ENCODE measurements at regions of chr12 and their contacts with region 1.

Region 1: GRCh38 chr12:14167005-14167628 is 185.7 kb upstream of the GRIN2B start:
- DNase-seq: no peak
- ATAC-seq: peak; percentile 70
- H3K4me3 ChIP-seq: no peak overlapping the region
- H3K27ac ChIP-seq: no peak overlapping the region
- H3K4me1 ChIP-seq: peaks cover 5% of the 10 kb centered on the region
- H3K27me3 ChIP-seq: no peaks in the 10 kb centered on the region
- CTCF ChIP-seq: peak; percentile 88 to 97 (median 94)
- EP300 ChIP-seq: no peak
- POLR2A ChIP-seq: no peak
- RAD21 ChIP-seq: peak; percentile 100

Region 2: DNA sequence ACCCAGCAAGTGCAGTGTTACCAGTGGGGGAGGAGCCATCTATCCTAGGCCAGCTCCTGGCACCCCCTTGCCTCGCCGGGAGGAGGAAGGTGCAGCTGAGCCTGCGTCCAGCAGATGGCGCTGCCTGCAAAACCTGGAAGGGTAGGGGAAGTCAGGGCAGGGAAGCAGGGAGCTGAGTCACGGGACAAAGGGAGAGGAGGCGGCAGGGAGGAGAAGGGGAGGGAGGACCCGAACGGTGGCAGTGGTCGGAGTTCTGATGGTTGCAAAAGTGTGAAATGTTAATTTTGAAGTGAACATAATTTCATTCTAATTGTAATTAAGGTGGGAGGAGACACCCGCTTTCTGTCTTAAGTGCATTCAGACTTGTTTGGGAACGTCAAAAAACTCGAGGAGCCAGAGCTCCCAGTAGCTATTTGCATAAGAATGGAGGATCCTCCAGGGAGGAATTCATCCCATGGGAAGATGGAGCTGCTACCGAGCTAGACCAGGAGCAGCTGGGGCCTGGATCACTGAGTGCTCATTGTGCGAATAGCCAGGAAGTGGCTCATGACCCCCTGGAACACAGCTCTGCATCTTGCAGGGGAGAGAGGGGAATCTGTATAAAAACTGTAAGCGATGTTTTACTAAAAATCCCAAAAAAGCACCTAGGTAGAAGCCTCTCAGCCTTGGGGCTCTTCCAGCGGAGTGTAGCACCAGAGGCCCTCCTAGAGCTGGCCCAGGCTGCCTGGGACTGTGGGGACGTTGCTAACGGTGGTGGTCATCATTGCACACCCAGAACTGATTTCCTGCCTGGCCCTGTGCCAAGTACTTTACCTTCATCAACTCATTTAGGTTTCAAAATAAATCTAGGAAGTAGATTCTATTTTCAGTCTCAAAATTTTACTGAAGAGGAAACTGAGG is 911.1 kb before region 1 on chr12:
- CTCF ChIA-PET with region 1: interaction called, 14 read pairs
- POLR2A ChIA-PET with region 1: no interaction called
- RAD21 ChIA-PET with region 1: interaction called, 4 read pairs
- SMC1A ChIA-PET with region 1: interaction called, 3 read pairs
- in situ Hi-C with region 1: no loop called
- intact Hi-C with region 1: no loop called
- DNase-seq: peak; percentile 28
- ATAC-seq: peak; percentile 100
- H3K4me3 ChIP-seq: no peak overlapping the region
- H3K27ac ChIP-seq: no peak overlapping the region
- H3K4me1 ChIP-seq: no peaks in the 10 kb centered on the region
- H3K27me3 ChIP-seq: 0 out of 4 replicates have a peak, but pooled peaks cover 1 to 5% of the 10 kb centered on the region in 2 experiments
- CTCF ChIP-seq: peak; percentile 89 to 98 (median 94)
- EP300 ChIP-seq: no peak
- POLR2A ChIP-seq: no peak
- RAD21 ChIP-seq: peak; percentile 65

Region 3: DNA sequence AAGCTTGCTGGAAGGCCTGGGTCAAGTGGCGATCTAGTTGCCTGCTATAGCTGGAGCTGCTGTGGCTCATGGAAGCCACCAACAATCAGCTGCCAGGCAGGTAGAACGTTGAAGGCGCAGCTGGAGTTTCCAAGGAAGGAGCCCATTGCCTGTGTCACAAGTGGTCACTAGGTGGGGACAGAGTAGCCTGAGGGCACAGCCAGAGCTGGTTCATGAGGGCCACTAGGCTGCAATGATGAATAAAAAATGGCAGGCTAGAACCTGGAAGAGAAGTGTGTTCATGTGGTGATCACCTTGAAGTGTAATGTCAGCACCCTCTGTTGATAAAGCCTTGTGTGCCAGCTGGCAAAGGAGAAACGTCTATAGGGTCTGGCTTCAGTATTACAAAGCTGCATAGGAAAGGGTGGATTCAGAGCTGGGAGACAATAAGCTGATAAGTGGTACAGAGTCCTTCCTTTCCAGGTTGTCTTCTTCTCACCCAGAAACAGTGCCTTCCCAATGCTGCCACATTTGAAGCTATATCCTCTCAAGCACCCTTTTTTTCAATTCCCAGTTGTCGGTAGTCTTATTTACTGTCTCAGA is 804.8 kb before region 1 on chr12:
- CTCF ChIA-PET with region 1: interaction called, 7 read pairs
- POLR2A ChIA-PET with region 1: no interaction called
- RAD21 ChIA-PET with region 1: interaction called, 12 read pairs
- SMC1A ChIA-PET with region 1: interaction called, 8 read pairs
- in situ Hi-C with region 1: no loop called
- intact Hi-C with region 1: loop called (anchors 2 kb)
- DNase-seq: no peak
- ATAC-seq: peak; percentile 100
- H3K4me3 ChIP-seq: no peak overlapping the region
- H3K27ac ChIP-seq: no peak overlapping the region
- H3K4me1 ChIP-seq: no peaks in the 10 kb centered on the region
- H3K27me3 ChIP-seq: peaks cover 0 to 3% of the 10 kb centered on the region in 2 experiments; a peak in 1 of 4 replicates
- CTCF ChIP-seq: peak; percentile 71 to 94 (median 91)
- EP300 ChIP-seq: no peak
- POLR2A ChIP-seq: no peak
- RAD21 ChIP-seq: peak; percentile 80

Region 4: GRCh38 chr12:13745111-13745685 is 421.9 kb before region 1 on chr12:
- CTCF ChIA-PET with region 1: interaction called, 3 read pairs
- POLR2A ChIA-PET with region 1: no interaction called
- RAD21 ChIA-PET with region 1: interaction called, 3 read pairs
- SMC1A ChIA-PET with region 1: no interaction called
- in situ Hi-C with region 1: loop called (anchors 10 kb)
- intact Hi-C with region 1: no loop called
- DNase-seq: no peak
- ATAC-seq: no peak
- H3K4me3 ChIP-seq: no peak overlapping the region
- H3K27ac ChIP-seq: no peak overlapping the region
- H3K4me1 ChIP-seq: no peaks in the 10 kb centered on the region
- H3K27me3 ChIP-seq: peaks cover 0 to 3% of the 10 kb centered on the region in 2 experiments; a peak in 1 of 4 replicates
- CTCF ChIP-seq: no peak
- EP300 ChIP-seq: no peak
- POLR2A ChIP-seq: no peak
- RAD21 ChIP-seq: no peak

Region 5: DNA sequence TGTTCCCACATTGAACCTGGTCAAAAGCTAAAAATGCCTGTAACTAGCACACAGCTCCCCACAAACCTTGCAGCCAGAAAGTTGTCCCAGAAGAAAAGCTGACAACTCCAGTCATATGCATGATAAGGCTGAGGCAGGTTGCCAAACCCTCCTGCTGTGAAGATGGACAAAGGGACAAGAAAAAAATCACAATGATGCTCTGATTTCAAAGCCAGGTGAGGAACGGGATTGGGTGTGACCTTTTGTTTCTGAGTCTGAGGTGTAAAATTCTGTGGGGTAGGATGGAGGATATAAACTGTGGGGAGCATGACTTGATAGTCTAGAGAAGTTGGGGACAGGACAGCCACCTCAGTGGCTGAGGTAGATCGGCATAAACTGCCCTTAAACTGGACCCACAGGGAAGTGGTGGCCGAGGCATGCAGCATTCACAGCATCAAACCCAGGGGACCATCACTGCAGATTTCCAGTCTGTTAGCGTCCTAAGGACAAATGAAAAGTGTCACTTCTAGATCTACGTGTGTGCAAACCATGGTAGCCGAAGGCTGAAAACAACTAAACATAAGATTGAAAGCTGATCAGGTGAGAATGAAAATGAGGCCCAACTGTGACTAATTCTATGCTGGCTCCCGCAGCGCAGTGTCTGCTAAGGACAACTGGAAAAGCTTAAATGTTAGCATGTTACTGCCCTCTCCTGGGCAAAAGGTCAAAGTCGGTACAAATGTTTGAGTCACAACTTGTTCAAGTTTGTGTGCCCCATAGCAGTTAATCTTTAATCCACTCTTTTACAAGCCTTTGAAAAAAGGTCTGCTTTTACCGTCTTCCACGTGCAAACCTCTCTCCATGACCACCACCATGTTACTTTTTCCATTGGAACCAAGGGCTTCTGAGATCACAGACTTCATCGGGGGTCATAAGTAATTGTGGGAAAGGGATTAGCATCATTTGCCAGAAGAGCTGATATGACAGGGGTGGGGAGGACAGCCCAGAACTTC is 225.6 kb before region 1 on chr12:
- CTCF ChIA-PET with region 1: interaction called, 17 read pairs
- POLR2A ChIA-PET with region 1: no interaction called
- RAD21 ChIA-PET with region 1: interaction called, 9 read pairs
- SMC1A ChIA-PET with region 1: interaction called, 5 read pairs
- in situ Hi-C with region 1: no loop called
- intact Hi-C with region 1: loop called (anchors 5 kb)
- DNase-seq: no peak
- ATAC-seq: peak; percentile 92
- H3K4me3 ChIP-seq: no peak overlapping the region
- H3K27ac ChIP-seq: no peak overlapping the region
- H3K4me1 ChIP-seq: no peaks in the 10 kb centered on the region
- H3K27me3 ChIP-seq: peaks cover 0 to 3% of the 10 kb centered on the region in 2 experiments; a peak in 1 of 4 replicates
- CTCF ChIP-seq: peak; percentile 28 to 72 (median 53); a peak in 5 of 6 replicates
- EP300 ChIP-seq: no peak
- POLR2A ChIP-seq: no peak
- RAD21 ChIP-seq: peak; percentile 63

Region 6: GRCh38 chr12:14111230-14111865 is 55.8 kb before region 1 on chr12:
- CTCF ChIA-PET with region 1: interaction called, 134 read pairs
- POLR2A ChIA-PET with region 1: no interaction called
- RAD21 ChIA-PET with region 1: interaction called, 23 read pairs
- SMC1A ChIA-PET with region 1: interaction called, 40 read pairs
- in situ Hi-C with region 1: loop called (anchors 5 kb)
- intact Hi-C with region 1: loop called (anchors 1 kb)
- DNase-seq: peak; percentile 33
- ATAC-seq: peak; percentile 99
- H3K4me3 ChIP-seq: no peak overlapping the region
- H3K27ac ChIP-seq: no peak overlapping the region
- H3K4me1 ChIP-seq: peaks cover 7% of the 10 kb centered on the region
- H3K27me3 ChIP-seq: no peaks in the 10 kb centered on the region
- CTCF ChIP-seq: peak; percentile 56 to 81 (median 76)
- EP300 ChIP-seq: no peak
- POLR2A ChIP-seq: no peak
- RAD21 ChIP-seq: peak; percentile 73

Region 7: GRCh38 chr12:14148489-14149270 is 18.4 kb before region 1 on chr12:
- CTCF ChIA-PET with region 1: interaction called, 10 read pairs
- POLR2A ChIA-PET with region 1: no interaction called
- RAD21 ChIA-PET with region 1: no interaction called
- SMC1A ChIA-PET with region 1: interaction called, 6 read pairs
- in situ Hi-C with region 1: no loop called
- intact Hi-C with region 1: no loop called
- DNase-seq: no peak
- ATAC-seq: peak; percentile 34; the same call in 2 of the 3 replicates
- H3K4me3 ChIP-seq: no peak overlapping the region
- H3K27ac ChIP-seq: no peak overlapping the region
- H3K4me1 ChIP-seq: peaks cover 12% of the 10 kb centered on the region
- H3K27me3 ChIP-seq: no peaks in the 10 kb centered on the region
- CTCF ChIP-seq: no peak
- EP300 ChIP-seq: no peak
- POLR2A ChIP-seq: no peak
- RAD21 ChIP-seq: no peak

Region 8: GRCh38 chr12:14589169-14590004 is 422.3 kb after region 1 on chr12:
- CTCF ChIA-PET with region 1: no interaction called
- POLR2A ChIA-PET with region 1: no interaction called
- RAD21 ChIA-PET with region 1: no interaction called
- SMC1A ChIA-PET with region 1: no interaction called
- in situ Hi-C with region 1: no loop called
- intact Hi-C with region 1: no loop called
- DNase-seq: no peak
- ATAC-seq: no peak
- H3K4me3 ChIP-seq: no peak overlapping the region
- H3K27ac ChIP-seq: no peak overlapping the region
- H3K4me1 ChIP-seq: no peaks in the 10 kb centered on the region
- H3K27me3 ChIP-seq: no peaks in the 10 kb centered on the region
- CTCF ChIP-seq: no peak
- EP300 ChIP-seq: no peak
- POLR2A ChIP-seq: no peak
- RAD21 ChIP-seq: no peak